Activated T-helper 2 cell treated with anti-CD3 and anti-CD28 coated beads, Interferon-gamma antibody, Interleukin-2, Interleukin-4, amounts not matched to agents 10 μg/mL and 5 μg/mL and 100 μg/mL, durations not matched to agents 14 hours and 24 hours and 36 hours (primary cell): ENCODE measurements at regions of chr2 and their contacts with region 1.

Region 1: DNA sequence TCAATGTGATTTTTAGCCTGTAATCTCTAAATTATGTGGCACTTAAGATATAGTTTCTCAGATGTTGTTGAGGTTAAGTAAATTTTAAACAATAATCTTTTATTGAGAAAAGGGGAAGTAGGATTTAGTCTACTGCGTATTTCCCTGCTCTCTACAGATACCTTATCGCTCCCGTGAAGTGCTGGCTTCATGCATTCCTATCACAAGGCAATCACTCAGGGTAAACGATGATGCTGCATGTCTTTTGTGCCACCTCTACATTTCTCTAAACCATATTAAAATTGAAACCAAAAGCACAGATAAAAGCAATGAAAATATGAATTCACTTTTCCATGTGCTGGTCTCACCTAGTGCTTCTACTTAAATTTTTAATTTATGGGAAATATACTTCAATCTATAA is 14.4 kb upstream of the RPE start:
- DNase-seq: no peak
- H3K4me3 Mint-ChIP-seq: no peak overlapping the region
- H3K27ac Mint-ChIP-seq: no peak overlapping the region
- H3K4me1 Mint-ChIP-seq: peaks cover 4% of the 10 kb centered on the region
- H3K27me3 Mint-ChIP-seq: peaks cover 23% of the 10 kb centered on the region

Region 2: DNA sequence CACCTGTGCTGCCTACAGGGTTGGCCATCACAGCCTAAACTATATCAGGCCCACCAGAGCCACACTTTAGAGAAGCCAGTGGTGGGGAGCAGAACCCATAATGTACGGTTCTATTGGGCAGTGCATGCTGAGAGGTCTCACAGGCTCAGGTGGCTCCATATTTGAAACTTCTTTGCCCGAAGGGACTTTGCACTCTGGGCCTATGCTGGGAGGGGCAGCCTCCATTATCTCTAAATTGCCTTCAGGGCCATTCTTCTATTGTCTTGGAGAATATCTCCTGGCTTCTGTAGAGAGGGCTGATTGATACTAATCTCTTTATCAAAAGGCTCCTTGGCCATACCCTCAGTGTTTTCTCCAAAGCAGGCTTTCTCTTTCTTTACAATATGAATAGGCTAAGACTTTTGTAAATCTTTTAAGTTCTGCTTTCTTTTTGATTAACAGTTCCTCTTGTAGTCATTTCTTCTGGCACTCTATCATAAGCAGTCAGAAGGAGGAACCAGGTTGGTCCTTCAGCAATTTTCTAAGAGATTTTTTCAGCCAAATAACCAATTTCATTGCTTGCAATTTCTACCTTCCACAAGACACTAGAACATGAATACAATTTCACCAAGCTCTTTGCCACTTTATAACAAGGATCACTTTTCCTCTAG is 59.0 kb after region 1 on chr2:
- intact Hi-C with region 1: loop called (anchors 5 kb)
- DNase-seq: no peak
- H3K4me3 Mint-ChIP-seq: no peak overlapping the region
- H3K27ac Mint-ChIP-seq: no peak overlapping the region
- H3K4me1 Mint-ChIP-seq: no peaks in the 10 kb centered on the region
- H3K27me3 Mint-ChIP-seq: no peaks in the 10 kb centered on the region